ENCODE measurements at regions of chrX and their contacts with region 1.

Region 1: GRCh38 chrX:118392716-118393115 is 46.8 kb downstream of the WDR44 start:
- DNase-seq: no peak
- ATAC-seq: no peak
- H3K4me3 Mint-ChIP-seq: no peak overlapping the region
- H3K27ac Mint-ChIP-seq: no peak overlapping the region
- H3K4me1 Mint-ChIP-seq: no peaks in the 10 kb centered on the region
- H3K27me3 Mint-ChIP-seq: no peaks in the 10 kb centered on the region
- CTCF ChIP-seq: no peak

Region 2: GRCh38 chrX:118345401-118346257 is 47.1 kb before region 1 on chrX and contains the start of gene WDR44:
- CTCF ChIA-PET with region 1: no interaction called
- POLR2A ChIA-PET with region 1: no interaction called
- intact Hi-C with region 1: loop called (anchors 5 kb)
- DNase-seq: peak; percentile 82
- ATAC-seq: peak; percentile 89
- H3K4me3 Mint-ChIP-seq: peak within 1 kb of the TSS; percentile 98
- H3K27ac Mint-ChIP-seq: peak within 1 kb of the TSS; percentile 97
- H3K4me1 Mint-ChIP-seq: peaks cover 39% of the 10 kb centered on the region
- H3K27me3 Mint-ChIP-seq: no peaks in the 10 kb centered on the region
- CTCF ChIP-seq: no peak
- total RNA-seq, gene WDR44: 15.3 and 18.7 TPM in 2 replicates

Measured in activated B cell treated with CpG ODN at 0.5 μM for 24 hours (primary cell).